ENCODE measurements at regions of chr7 and their contacts with region 1.

Region 1: DNA sequence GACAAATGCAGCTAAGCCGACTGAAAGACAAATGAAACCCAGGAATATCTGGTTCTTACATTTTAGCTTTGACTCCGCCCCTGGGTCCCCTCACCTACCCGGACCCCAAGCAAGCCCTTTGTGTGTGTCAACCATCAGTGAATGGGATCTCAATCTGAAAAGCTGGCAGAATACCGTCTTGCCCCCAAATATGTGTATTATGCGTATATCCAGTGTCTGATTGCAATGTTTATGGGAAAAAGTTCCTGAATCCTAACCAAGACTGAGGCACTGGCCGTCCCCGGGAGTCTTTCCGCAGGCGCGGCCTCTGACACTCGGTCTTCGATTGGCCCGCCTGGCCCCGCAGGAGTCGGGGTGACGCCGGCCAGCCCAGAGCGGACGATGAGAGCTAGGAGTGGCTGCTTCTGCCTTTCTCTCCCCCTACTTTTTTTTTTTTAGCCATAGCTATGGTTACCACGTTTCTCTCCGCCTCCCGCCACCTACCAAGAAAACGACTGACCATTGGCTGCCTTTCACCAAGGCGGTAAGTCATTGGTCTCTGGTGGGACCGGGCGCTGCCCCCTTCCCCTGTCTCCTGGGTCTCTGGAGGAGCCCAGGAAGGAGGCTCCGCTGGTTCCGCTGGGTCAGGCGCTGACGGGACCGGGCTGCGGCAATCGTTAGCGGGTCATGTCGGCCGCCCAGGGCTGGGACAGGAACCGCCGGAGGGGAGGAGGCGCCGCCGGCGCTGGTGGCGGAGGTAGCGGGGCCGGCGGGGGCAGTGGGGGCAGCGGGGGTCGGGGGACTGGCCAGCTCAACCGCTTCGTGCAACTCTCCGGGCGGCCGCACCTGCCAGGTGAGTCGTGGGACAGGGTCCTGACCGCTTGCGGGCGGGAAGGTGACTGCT is at the start of gene KLHDC10:
- DNase-seq: peak; percentile 97
- H3K4me3 ChIP-seq: peak within 1 kb of the TSS; percentile 83
- H3K27ac ChIP-seq: peak within 1 kb of the TSS; percentile 19
- H3K4me1 ChIP-seq: peaks cover 15% of the 10 kb centered on the region
- CTCF ChIP-seq: no peak
- total RNA-seq, gene KLHDC10: 15.9 and 24.1 TPM in 2 replicates

Region 2: GRCh38 chr7:130197094-130197493 is 126.9 kb after region 1 on chr7:
- CTCF ChIA-PET with region 1: no interaction called
- POLR2A ChIA-PET with region 1: no interaction called
- intact Hi-C with region 1: no loop called
- DNase-seq: no peak
- H3K4me3 ChIP-seq: no peak overlapping the region
- H3K27ac ChIP-seq: no peak overlapping the region
- H3K4me1 ChIP-seq: peaks cover 2% of the 10 kb centered on the region
- CTCF ChIP-seq: no peak

Region 3: GRCh38 chr7:130210181-130210935 is 140.1 kb after region 1 on chr7:
- CTCF ChIA-PET with region 1: no interaction called
- POLR2A ChIA-PET with region 1: interaction called, 7 read pairs
- intact Hi-C with region 1: loop called (anchors 5 kb)
- DNase-seq: no peak
- H3K4me3 ChIP-seq: no peak overlapping the region
- H3K27ac ChIP-seq: no peak overlapping the region
- H3K4me1 ChIP-seq: no peaks in the 10 kb centered on the region
- CTCF ChIP-seq: no peak

Region 4: GRCh38 chr7:130440527-130441365 is 370.5 kb after region 1 on chr7 and contains the start of gene CEP41:
- CTCF ChIA-PET with region 1: no interaction called
- POLR2A ChIA-PET with region 1: no interaction called
- intact Hi-C with region 1: loop called (anchors 10 kb)
- DNase-seq: peak; percentile 98
- H3K4me3 ChIP-seq: peak within 1 kb of the TSS; percentile 71
- H3K27ac ChIP-seq: peak within 1 kb of the TSS; percentile 76
- H3K4me1 ChIP-seq: peaks cover 24% of the 10 kb centered on the region
- CTCF ChIP-seq: no peak
- total RNA-seq, gene CEP41: 19.6 and 25.6 TPM in 2 replicates

Region 5: GRCh38 chr7:130758429-130759056 is 688.3 kb after region 1 on chr7:
- CTCF ChIA-PET with region 1: no interaction called
- POLR2A ChIA-PET with region 1: no interaction called
- intact Hi-C with region 1: loop called (anchors 1 kb)
- DNase-seq: peak; percentile 60
- H3K4me3 ChIP-seq: no peak overlapping the region
- H3K27ac ChIP-seq: no peak overlapping the region
- H3K4me1 ChIP-seq: no peaks in the 10 kb centered on the region
- CTCF ChIP-seq: peak; percentile 96

Region 6: DNA sequence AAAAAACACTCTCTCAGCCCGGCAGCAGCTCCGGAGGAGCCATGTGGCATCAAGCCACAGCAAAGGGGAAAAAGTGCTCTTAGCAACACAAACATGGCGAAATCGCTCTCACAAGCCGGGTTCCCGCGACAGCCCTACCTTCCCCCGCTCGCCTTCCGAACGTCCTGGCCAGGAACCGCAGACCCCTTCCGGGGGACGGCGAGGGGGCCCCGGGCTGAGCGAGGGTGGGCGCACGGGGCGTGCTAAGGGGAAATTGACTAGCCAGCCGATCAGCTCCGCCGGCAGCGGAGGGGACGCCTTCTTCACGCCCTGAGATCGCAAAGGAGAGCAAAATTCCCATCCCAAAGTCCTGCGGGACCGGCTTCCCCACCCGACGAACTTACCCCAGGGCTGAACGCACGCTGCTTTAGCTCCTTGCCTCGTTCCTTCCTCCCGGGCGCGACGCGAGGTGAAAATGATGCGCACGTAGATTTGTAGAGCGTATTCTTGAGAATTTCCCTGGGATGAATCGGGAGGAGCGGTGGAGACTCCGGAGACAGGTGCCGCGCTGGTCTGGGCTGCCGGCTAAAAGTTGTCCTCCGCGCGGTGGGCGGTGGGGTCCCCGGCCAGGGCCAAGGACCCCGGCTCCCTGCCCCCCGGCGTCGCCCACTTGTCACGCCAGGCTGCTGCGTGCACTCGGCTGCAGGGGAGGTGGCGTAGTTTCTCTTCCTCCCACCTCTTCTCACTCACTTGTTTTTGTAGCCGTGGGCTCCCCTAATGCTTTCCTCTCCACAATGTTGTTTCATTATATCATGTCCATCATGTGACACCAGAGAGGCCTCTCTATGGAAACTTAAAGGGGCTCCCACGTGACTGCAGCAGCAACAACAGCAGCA is 1037.4 kb after region 1 on chr7:
- CTCF ChIA-PET with region 1: no interaction called
- POLR2A ChIA-PET with region 1: no interaction called
- intact Hi-C with region 1: no loop called
- DNase-seq: peak; percentile 79
- H3K4me3 ChIP-seq: peak overlapping the region; percentile 85
- H3K27ac ChIP-seq: peak overlapping the region; percentile 85
- H3K4me1 ChIP-seq: peaks cover 37% of the 10 kb centered on the region
- CTCF ChIP-seq: no peak

Measured in OCI-LY7 (cell line).